H1 (cell line): ENCODE measurements at regions of chr3 and their contacts with region 1.

Region 1: DNA sequence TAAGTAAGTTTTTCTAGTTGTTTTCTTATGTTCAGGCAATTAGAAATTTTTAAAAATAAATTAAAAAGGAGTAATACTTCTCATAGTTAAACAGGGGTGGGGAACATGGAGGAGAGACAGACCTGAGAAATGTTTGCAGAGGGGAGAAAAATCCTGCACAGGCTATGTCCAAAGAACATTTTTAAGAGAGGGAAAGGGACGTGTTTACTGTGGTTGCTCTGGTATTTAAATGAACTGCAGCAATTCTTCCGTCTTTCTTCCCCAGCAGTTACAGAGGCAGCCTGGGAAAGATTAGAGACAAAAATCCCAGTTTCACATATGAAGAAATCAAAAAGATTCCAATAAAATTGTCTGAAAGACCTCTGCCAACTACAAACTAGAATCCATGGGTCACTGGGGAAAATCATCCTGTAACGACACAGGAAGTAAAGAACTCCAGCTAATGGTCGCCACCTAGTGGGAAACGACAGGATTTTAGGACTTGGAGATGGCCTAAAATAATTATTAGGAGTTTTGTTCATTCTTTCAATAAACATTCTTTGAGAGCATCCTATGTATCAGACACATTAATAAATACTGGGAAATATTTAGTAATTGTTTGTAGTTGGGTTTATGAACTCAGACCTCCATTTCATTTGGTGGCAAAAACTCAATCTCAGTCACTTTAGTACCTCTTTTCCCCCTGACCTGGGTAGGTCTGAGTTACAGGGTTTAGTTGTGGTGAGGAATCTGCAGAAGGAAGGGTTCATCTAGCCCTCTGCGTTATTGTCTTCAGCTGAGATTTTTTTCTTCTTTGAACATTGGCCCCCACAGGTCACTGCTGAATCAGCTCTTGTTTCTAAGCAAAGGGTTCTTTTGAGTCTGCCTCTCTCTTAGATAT is 69.9 kb upstream of the GOLIM4 start:
- DNase-seq: no peak
- H3K4me3 ChIP-seq: no peak overlapping the region
- H3K27ac ChIP-seq: no peak overlapping the region
- H3K4me1 ChIP-seq: no peaks in the 10 kb centered on the region
- H3K27me3 ChIP-seq: no peaks in the 10 kb centered on the region
- CTCF ChIP-seq: peak in 2 of 3 experiments; percentile 75 to 85; a peak in 3 of 4 replicates
- EP300 ChIP-seq: no peak
- POLR2A ChIP-seq: no peak
- RAD21 ChIP-seq: peak; percentile 85 to 89

Region 2: GRCh38 chr3:167978031-167978430 is 187.6 kb before region 1 on chr3:
- CTCF ChIA-PET with region 1: no interaction called
- POLR2A ChIA-PET with region 1: no interaction called
- DNase-seq: no peak
- H3K4me3 ChIP-seq: no peak overlapping the region
- H3K27ac ChIP-seq: no peak overlapping the region
- H3K4me1 ChIP-seq: no peaks in the 10 kb centered on the region
- H3K27me3 ChIP-seq: no peaks in the 10 kb centered on the region
- CTCF ChIP-seq: no peak
- EP300 ChIP-seq: no peak
- POLR2A ChIP-seq: no peak
- RAD21 ChIP-seq: no peak

Region 3: DNA sequence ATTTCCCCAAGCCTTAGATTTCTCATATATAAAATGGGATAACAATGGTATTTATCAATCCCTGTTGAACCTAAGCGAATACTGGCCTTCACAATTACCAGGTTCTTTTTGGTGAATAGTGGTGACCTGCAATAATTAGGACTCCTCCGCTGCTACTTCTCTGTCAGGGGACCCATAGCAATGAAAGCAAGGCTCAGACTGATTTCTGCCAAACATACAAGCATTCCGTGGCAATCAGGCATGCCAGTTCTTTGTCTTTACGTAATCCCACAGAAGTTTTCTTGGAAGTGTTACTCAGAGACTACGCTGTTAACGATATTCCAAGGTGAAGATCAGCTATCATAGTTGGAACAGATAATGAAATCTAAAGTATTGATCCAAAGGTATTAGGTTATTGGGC is 175.6 kb before region 1 on chr3:
- CTCF ChIA-PET with region 1: no interaction called
- POLR2A ChIA-PET with region 1: no interaction called
- DNase-seq: no peak
- H3K4me3 ChIP-seq: no peak overlapping the region
- H3K27ac ChIP-seq: no peak overlapping the region
- H3K4me1 ChIP-seq: no peaks in the 10 kb centered on the region
- H3K27me3 ChIP-seq: no peaks in the 10 kb centered on the region
- CTCF ChIP-seq: no peak
- EP300 ChIP-seq: no peak
- POLR2A ChIP-seq: no peak
- RAD21 ChIP-seq: no peak

Region 4: DNA sequence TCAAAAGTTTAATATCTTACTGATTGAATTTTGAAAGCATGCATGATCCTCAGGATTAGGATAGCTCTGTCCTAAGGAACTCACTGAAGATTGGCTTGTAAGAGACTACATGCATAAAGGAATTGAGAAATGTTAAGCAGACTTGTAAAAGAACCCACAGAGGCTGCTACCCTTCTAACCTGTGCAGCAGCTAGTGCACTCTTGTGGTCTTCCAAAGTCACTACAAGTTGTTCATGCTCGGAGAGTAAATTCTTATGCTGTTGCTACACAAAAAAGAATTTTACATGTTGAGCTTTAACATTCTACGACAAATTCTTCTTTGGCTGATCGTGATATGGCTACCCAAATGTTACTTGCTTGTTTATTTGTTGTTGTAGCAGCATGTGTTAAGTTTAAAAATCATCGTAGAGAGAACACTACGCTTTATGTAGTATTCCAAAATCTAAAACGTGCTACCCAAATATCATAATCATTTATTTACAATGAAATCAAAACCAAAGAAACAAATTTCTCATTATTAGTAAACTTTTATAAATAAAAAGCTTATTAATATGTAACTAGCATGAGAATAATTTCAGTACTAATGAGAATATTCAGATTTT is 124.9 kb before region 1 on chr3:
- CTCF ChIA-PET with region 1: interaction called, 79 read pairs
- POLR2A ChIA-PET with region 1: no interaction called
- DNase-seq: no peak
- H3K4me3 ChIP-seq: no peak overlapping the region
- H3K27ac ChIP-seq: no peak overlapping the region
- H3K4me1 ChIP-seq: no peaks in the 10 kb centered on the region
- H3K27me3 ChIP-seq: no peaks in the 10 kb centered on the region
- CTCF ChIP-seq: peak in 2 of 3 experiments; percentile 78; a peak in 3 of 4 replicates
- EP300 ChIP-seq: no peak
- POLR2A ChIP-seq: no peak
- RAD21 ChIP-seq: peak; percentile 82 to 89

Region 5: DNA sequence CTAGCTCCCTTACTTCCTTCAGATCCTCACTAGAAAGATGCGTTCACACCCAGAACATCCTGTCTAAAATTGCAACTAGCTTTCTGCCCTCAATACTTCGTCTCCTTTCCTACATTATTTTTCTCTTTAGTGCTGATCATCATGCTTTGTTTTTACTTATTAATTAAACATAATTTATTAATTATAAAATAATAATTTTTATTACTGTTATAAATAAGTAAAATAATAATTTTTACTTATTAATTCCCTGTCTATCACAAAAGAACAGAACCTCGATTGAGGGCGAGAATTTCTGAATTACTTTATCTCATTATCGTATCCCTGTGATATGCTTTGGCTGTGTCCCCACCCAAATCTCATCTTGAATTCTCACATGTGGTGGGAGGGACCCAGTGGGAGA is 111.2 kb before region 1 on chr3:
- CTCF ChIA-PET with region 1: interaction called, 79 read pairs
- POLR2A ChIA-PET with region 1: interaction called, 5 read pairs
- DNase-seq: no peak
- H3K4me3 ChIP-seq: no peak overlapping the region
- H3K27ac ChIP-seq: no peak overlapping the region
- H3K4me1 ChIP-seq: no peaks in the 10 kb centered on the region
- H3K27me3 ChIP-seq: no peaks in the 10 kb centered on the region
- CTCF ChIP-seq: no peak
- EP300 ChIP-seq: no peak
- POLR2A ChIP-seq: no peak
- RAD21 ChIP-seq: no peak

Region 6: GRCh38 chr3:168088106-168088720 is 77.4 kb before region 1 on chr3:
- CTCF ChIA-PET with region 1: interaction called, 11 read pairs
- POLR2A ChIA-PET with region 1: no interaction called
- DNase-seq: no peak
- H3K4me3 ChIP-seq: no peak overlapping the region
- H3K27ac ChIP-seq: no peak overlapping the region
- H3K4me1 ChIP-seq: peaks cover 0 to 3% (median 3%) of the 10 kb centered on the region in 4 experiments; a peak in 3 of 7 replicates
- H3K27me3 ChIP-seq: no peaks in the 10 kb centered on the region
- CTCF ChIP-seq: peak; percentile 40 to 69 (median 51)
- EP300 ChIP-seq: no peak
- POLR2A ChIP-seq: no peak
- RAD21 ChIP-seq: peak; percentile 10 to 37; a peak in 2 of 4 replicates